ENCODE measurements at regions of chr12 and their contacts with region 1.

Region 1: GRCh38 chr12:57213058-57213715 is 3.4 kb upstream of the NXPH4 start:
- DNase-seq: peak; percentile 87 to 95
- H3K4me3 ChIP-seq: no peak overlapping the region
- H3K27ac ChIP-seq: no peak overlapping the region
- H3K4me1 ChIP-seq: peaks cover 19 to 47% (median 40%) of the 10 kb centered on the region in 4 donors
- H3K27me3 ChIP-seq: peaks cover 18 to 48% (median 40%) of the 10 kb centered on the region in 3 donors
- CTCF ChIP-seq: peak in 6 of 7 experiments; percentile 69 to 99 (median 94)
- EP300 ChIP-seq: no peak
- POLR2A ChIP-seq: no peak

Region 2: DNA sequence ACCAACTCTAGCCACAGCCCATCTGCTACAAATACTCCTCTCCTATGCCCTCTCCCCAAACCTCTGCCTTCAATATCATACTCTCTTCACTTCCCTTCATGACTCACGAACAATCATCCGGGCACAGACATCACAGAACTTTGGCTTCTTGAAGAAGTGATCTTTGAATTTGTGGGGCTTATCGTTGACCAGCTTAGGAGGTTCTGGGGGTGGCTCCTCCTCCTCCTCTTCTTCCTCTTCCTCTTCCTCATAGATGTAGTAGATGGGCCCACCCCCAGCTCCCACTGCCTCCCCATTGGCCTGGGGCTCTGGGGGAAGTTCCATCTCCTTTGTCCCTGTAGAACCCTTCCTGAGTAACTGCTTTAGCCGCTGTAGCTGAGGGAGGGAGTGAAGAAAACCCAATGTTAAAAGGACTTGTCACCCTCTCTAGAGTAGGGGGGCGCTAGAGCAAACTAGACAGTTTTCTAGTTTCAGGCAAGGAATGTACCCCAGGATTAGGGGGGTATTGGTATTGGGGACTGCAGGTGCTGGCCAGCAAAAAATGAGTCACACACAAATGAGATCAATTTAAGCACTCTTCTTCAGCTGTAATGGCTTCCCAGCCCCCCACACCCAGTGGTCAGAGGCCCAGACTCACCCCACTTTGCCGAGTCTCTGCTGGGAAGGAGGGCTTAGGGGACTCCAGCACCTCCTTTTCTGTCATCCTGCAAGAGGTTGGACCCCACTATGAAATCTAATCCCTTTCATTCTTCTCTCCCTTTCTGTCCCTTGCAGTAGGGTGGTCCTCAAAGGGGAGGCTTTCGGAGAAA is 36.0 kb after region 1 on chr12:
- intact Hi-C with region 1: loop called (anchors 5 kb)
- DNase-seq: no peak
- H3K4me3 ChIP-seq: no peak overlapping the region
- H3K27ac ChIP-seq: no peak overlapping the region
- H3K4me1 ChIP-seq: peaks cover 0 to 2% (median under 1%) of the 10 kb centered on the region in 4 donors
- H3K27me3 ChIP-seq: peaks cover 0 to 15% (median 2%) of the 10 kb centered on the region in 3 donors
- CTCF ChIP-seq: no peak
- EP300 ChIP-seq: no peak
- POLR2A ChIP-seq: no peak